SK-N-SH (cell line): ENCODE measurements at regions of chr21 and their contacts with region 1.

Region 1: GRCh38 chr21:41068967-41069642 is 98.9 kb upstream of the BACE2 start:
- DNase-seq: peak; percentile 87
- H3K4me3 ChIP-seq: peak overlapping the region in 1 of 2 experiments; percentile 10; a peak in 1 of 4 replicates
- H3K27ac ChIP-seq: no peak overlapping the region
- H3K4me1 ChIP-seq: peaks cover 0 to 18% of the 10 kb centered on the region in 2 experiments; a peak in 2 of 4 replicates
- H3K27me3 ChIP-seq: no peaks in the 10 kb centered on the region
- CTCF ChIP-seq: peak; percentile 53
- EP300 ChIP-seq: no peak
- RAD21 ChIP-seq: peak; percentile 85

Region 2: DNA sequence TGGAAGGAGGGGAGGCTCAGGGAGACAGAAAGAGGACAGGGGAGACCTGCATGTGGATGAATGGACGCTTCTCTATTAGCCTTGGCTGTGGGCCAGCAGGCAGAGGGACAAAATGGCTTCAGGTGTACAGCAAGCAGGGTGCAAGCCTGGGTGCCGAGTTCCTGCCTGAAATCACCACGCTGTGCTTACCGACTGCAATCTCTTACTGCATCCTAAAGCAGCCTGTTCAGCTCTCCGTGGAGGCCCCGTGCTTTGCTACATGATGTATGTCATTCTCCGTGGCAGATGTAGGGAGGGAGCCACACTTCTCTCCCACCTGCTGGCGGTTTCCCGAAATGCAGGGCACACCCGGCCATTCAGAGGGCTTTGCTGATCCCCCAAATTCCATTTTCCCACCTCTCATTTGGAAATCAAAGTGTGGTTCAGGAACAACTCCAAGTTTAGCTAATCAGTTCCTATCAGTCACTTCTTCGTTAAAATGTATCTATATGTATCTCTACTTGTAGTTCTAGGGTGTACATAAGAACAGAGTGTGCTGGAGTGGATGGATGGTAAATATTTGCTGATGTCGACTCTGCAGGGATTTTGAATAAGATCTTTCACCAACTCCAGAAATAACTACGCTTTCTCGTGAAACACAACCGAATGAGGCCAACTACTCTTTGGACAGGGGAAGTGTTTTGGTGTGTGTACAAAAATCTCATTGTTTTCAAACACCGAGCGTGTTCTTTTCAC is 23.4 kb before region 1 on chr21:
- CTCF ChIA-PET with region 1: interaction called, 23 read pairs
- POLR2A ChIA-PET with region 1: no interaction called
- DNase-seq: peak; percentile 43
- H3K4me3 ChIP-seq: no peak overlapping the region
- H3K27ac ChIP-seq: no peak overlapping the region
- H3K4me1 ChIP-seq: peaks cover 0 to 3% of the 10 kb centered on the region in 2 experiments; a peak in 1 of 4 replicates
- H3K27me3 ChIP-seq: no peaks in the 10 kb centered on the region
- CTCF ChIP-seq: no peak
- EP300 ChIP-seq: no peak
- RAD21 ChIP-seq: peak; percentile 21; the same call in 1 of the 2 replicates

Region 3: GRCh38 chr21:41054018-41054578 is 15.0 kb before region 1 on chr21:
- CTCF ChIA-PET with region 1: interaction called, 11 read pairs
- POLR2A ChIA-PET with region 1: no interaction called
- DNase-seq: no peak
- H3K4me3 ChIP-seq: no peak overlapping the region
- H3K27ac ChIP-seq: no peak overlapping the region
- H3K4me1 ChIP-seq: no peaks in the 10 kb centered on the region; a peak in 1 of 4 replicates
- H3K27me3 ChIP-seq: no peaks in the 10 kb centered on the region
- CTCF ChIP-seq: no peak
- EP300 ChIP-seq: no peak
- RAD21 ChIP-seq: no peak

Region 4: DNA sequence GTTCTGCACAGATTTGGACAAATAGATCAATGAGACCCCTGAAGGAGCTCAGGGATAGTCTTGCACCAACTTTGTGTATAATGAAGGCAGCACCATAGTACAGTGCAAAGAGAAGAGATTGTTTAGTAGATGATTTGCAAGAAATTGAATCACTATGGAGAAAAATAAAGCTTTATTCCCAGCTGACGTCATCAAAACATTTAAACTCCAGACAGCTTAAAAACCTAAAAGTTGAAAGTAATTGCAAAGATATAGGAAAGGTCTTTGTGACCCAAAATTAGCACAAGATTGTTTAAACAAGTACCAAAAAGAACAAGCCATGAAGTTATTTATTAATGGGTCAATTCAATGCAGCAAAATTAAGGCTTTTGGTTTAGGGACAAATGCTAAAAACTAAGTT is 10.1 kb after region 1 on chr21:
- CTCF ChIA-PET with region 1: interaction called, 11 read pairs
- POLR2A ChIA-PET with region 1: no interaction called
- DNase-seq: no peak
- H3K4me3 ChIP-seq: no peak overlapping the region
- H3K27ac ChIP-seq: no peak overlapping the region
- H3K4me1 ChIP-seq: no peaks in the 10 kb centered on the region
- H3K27me3 ChIP-seq: no peaks in the 10 kb centered on the region
- CTCF ChIP-seq: no peak
- EP300 ChIP-seq: no peak
- RAD21 ChIP-seq: no peak